PC-9 (cell line): ENCODE measurements at regions of chr7 and their contacts with region 1.

Region 1: GRCh38 chr7:142385491-142386340 is 127.9 kb upstream of the PRSS58 start:
- DNase-seq: peak; percentile 64 to 69
- H3K4me3 ChIP-seq: no peak overlapping the region
- H3K27ac ChIP-seq: no peak overlapping the region
- H3K4me1 ChIP-seq: 0 out of 2 replicates have a peak, but pooled peaks cover 12% of the 10 kb centered on the region
- H3K27me3 ChIP-seq: no peaks in the 10 kb centered on the region
- CTCF ChIP-seq: peak; percentile 79

Region 2: GRCh38 chr7:141960687-141961422 is 424.9 kb before region 1 on chr7:
- CTCF ChIA-PET with region 1: no interaction called
- POLR2A ChIA-PET with region 1: no interaction called
- intact Hi-C with region 1: no loop called
- DNase-seq: no peak
- H3K4me3 ChIP-seq: no peak overlapping the region
- H3K27ac ChIP-seq: no peak overlapping the region
- H3K4me1 ChIP-seq: no peaks in the 10 kb centered on the region
- H3K27me3 ChIP-seq: no peaks in the 10 kb centered on the region
- CTCF ChIP-seq: no peak

Region 3: GRCh38 chr7:142357953-142358520 is 27.7 kb before region 1 on chr7:
- CTCF ChIA-PET with region 1: interaction called, 3 read pairs
- POLR2A ChIA-PET with region 1: no interaction called
- intact Hi-C with region 1: loop called (anchors 1 kb)
- DNase-seq: peak; percentile 71 to 75
- H3K4me3 ChIP-seq: peak overlapping the region; percentile 27; the same call in 1 of the 2 replicates
- H3K27ac ChIP-seq: peak overlapping the region; percentile 0; the same call in 1 of the 2 replicates
- H3K4me1 ChIP-seq: peaks cover 28% of the 10 kb centered on the region
- H3K27me3 ChIP-seq: no peaks in the 10 kb centered on the region
- CTCF ChIP-seq: peak; percentile 98

Region 4: DNA sequence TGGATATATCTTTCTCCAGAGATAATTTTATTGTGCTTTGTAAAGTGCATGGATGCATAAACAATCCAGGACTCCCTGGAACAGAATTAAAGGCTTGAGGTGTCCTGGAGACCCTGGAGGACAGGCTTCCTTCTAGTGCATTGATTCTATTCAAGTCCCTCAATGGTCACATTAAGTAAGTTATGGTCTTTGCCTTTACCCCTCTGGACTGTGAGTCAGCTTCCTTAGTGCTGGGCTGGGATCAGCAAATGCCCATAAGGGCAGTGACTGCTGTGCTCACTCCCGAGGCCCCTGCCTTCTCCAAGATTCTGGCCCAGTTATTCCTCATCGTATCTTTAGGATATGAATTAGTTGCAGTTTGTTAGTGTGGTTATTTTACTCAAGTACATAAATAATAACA is 50.9 kb after region 1 on chr7:
- CTCF ChIA-PET with region 1: no interaction called
- POLR2A ChIA-PET with region 1: no interaction called
- intact Hi-C with region 1: no loop called
- DNase-seq: no peak
- H3K4me3 ChIP-seq: no peak overlapping the region
- H3K27ac ChIP-seq: no peak overlapping the region
- H3K4me1 ChIP-seq: peaks cover 34% of the 10 kb centered on the region
- H3K27me3 ChIP-seq: no peaks in the 10 kb centered on the region
- CTCF ChIP-seq: no peak

Region 5: GRCh38 chr7:142478479-142479072 is 92.9 kb after region 1 on chr7:
- CTCF ChIA-PET with region 1: interaction called, 3 read pairs
- POLR2A ChIA-PET with region 1: no interaction called
- intact Hi-C with region 1: loop called (anchors 2 kb)
- DNase-seq: peak; percentile 58 to 74
- H3K4me3 ChIP-seq: no peak overlapping the region
- H3K27ac ChIP-seq: no peak overlapping the region
- H3K4me1 ChIP-seq: peaks cover 16% of the 10 kb centered on the region
- H3K27me3 ChIP-seq: no peaks in the 10 kb centered on the region
- CTCF ChIP-seq: peak; percentile 91

Region 6: GRCh38 chr7:142603870-142604448 is 218.2 kb after region 1 on chr7:
- CTCF ChIA-PET with region 1: no interaction called
- POLR2A ChIA-PET with region 1: no interaction called
- intact Hi-C with region 1: loop called (anchors 5 kb)
- DNase-seq: peak; percentile 51 to 65
- H3K4me3 ChIP-seq: peak overlapping the region; percentile 25; the same call in 1 of the 2 replicates
- H3K27ac ChIP-seq: no peak overlapping the region
- H3K4me1 ChIP-seq: peaks cover 18% of the 10 kb centered on the region
- H3K27me3 ChIP-seq: no peaks in the 10 kb centered on the region
- CTCF ChIP-seq: peak; percentile 97

Region 7: DNA sequence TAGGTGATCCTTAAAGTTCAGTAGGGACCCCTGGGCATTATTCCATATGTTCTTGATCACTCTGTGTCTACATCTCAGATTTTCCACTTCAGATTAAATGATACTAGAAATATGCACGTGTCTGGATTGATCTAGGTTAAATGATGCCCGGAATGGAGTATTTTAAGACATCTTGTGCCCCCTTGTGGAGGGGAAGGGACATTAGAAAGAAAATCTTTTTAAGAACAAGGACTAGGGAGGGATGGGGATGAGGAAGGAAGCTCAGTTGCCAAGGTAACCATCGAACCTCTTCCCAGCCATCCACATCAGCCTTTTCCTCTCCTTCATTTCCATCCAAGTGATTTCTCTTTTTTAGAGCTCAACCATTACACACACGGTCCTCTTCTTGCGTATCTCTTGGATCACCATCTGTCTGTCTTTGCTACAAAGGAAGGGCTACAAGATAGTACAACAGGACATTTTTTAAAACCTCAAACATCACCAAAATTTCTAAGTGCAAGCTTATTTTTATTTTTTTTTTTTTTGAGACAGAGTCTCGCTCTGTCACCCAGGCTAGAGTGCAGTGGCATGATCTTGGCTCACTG is 425.5 kb after region 1 on chr7:
- CTCF ChIA-PET with region 1: no interaction called
- POLR2A ChIA-PET with region 1: interaction called, 3 read pairs
- intact Hi-C with region 1: loop called (anchors 2 kb)
- DNase-seq: peak; percentile 22 to 78
- H3K4me3 ChIP-seq: no peak overlapping the region
- H3K27ac ChIP-seq: peak overlapping the region; percentile 96
- H3K4me1 ChIP-seq: peaks cover 84% of the 10 kb centered on the region
- H3K27me3 ChIP-seq: no peaks in the 10 kb centered on the region
- CTCF ChIP-seq: peak; percentile 95